WTC11 (cell line): ENCODE measurements at regions of chr7 and their contacts with region 1.

Region 1: GRCh38 chr7:41940760-41941343 is 238.0 kb upstream of the INHBA start:
- DNase-seq: peak; percentile 71
- ATAC-seq: peak; percentile 83
- H3K4me3 Mint-ChIP-seq: no peak overlapping the region
- H3K27ac Mint-ChIP-seq: no peak overlapping the region
- H3K4me1 Mint-ChIP-seq: peaks cover 18% of the 10 kb centered on the region
- H3K27me3 Mint-ChIP-seq: peaks cover 17% of the 10 kb centered on the region
- CTCF ChIP-seq: peak; percentile 84

Region 2: GRCh38 chr7:41834805-41835694 is 105.8 kb before region 1 on chr7:
- CTCF ChIA-PET with region 1: no interaction called
- POLR2A ChIA-PET with region 1: no interaction called
- DNase-seq: no peak
- ATAC-seq: 0 out of 2 replicates have a peak, but pooled peaks have one; percentile 26
- H3K4me3 Mint-ChIP-seq: no peak overlapping the region
- H3K27ac Mint-ChIP-seq: no peak overlapping the region
- H3K4me1 Mint-ChIP-seq: peaks cover 13% of the 10 kb centered on the region
- H3K27me3 Mint-ChIP-seq: peaks cover 15% of the 10 kb centered on the region
- CTCF ChIP-seq: no peak

Region 3: GRCh38 chr7:41892356-41893100 is 48.3 kb before region 1 on chr7:
- CTCF ChIA-PET with region 1: interaction called, 14 read pairs
- POLR2A ChIA-PET with region 1: no interaction called
- DNase-seq: peak; percentile 65
- ATAC-seq: peak; percentile 97
- H3K4me3 Mint-ChIP-seq: no peak overlapping the region
- H3K27ac Mint-ChIP-seq: no peak overlapping the region
- H3K4me1 Mint-ChIP-seq: peaks cover 1% of the 10 kb centered on the region; the same call in 1 of the 2 replicates
- H3K27me3 Mint-ChIP-seq: no peaks in the 10 kb centered on the region
- CTCF ChIP-seq: peak; percentile 28; the same call in 1 of the 2 replicates

Region 4: DNA sequence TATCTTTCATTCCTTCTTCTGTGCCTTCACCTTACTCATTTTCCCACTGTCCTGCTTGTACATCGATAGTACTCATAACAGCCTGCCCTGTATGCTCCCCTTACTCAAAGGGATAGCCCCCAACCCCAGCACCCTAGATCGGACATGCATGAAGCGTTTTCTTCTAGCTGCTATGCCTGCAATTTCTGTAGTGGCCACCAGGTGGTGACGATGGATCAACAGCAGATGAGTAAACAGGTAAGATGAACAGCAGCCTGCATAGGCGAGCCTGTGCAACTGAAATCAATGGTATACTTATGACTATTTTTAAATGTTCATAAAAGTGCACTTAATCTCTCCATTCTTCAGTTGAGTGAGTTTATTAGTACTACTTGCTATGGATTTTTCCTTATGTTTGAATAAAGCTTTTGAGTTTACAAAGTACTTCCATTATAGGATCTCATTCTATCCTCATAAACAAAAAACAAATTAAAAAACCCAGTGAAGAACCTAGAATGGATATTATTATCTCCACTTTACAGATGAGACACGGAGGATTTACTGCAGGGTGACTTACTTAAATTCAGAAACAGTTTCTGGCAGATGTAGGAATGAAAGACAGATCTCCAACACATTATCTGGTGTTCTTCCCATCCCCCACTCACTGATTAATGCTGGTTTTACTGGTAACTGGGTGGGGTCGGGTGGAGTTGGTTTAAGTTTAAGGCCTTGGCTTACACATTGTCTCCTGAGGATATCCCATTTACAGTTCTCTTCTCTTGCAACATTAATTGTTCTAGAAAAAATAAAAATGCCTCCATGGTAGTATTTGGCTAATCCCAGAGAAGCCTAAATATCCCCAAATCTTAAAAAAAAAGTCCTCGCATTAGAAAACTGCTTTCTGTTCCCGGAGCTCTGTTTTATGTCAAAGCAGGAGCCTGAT is 74.0 kb after region 1 on chr7:
- CTCF ChIA-PET with region 1: interaction called, 10 read pairs
- POLR2A ChIA-PET with region 1: no interaction called
- DNase-seq: peak; percentile 87
- ATAC-seq: peak; percentile 83
- H3K4me3 Mint-ChIP-seq: no peak overlapping the region
- H3K27ac Mint-ChIP-seq: no peak overlapping the region
- H3K4me1 Mint-ChIP-seq: peaks cover 30% of the 10 kb centered on the region
- H3K27me3 Mint-ChIP-seq: no peaks in the 10 kb centered on the region; the same call in 1 of the 2 replicates
- CTCF ChIP-seq: peak; percentile 92

Region 5: DNA sequence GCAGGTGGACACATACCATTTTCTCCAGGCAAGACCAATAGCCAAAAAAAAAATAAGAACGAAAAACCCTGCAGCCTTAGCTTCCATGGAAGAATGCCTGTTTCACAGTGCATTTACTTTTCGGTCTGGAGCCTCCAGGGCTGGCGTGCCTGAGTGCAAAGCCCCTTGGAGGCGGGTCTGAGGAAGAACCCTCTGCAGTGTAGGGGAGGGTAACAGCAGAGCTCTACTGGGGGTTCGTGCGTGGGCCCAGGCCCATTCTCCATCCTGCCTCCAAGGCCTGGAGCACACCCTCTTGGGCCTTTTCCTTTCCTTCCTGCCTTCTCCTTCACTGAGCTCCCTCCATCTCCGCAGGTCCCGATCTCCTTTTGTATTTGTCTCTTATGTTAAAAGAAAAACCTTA is 468.4 kb after region 1 on chr7:
- CTCF ChIA-PET with region 1: interaction called, 11 read pairs
- POLR2A ChIA-PET with region 1: no interaction called
- DNase-seq: no peak
- ATAC-seq: peak; percentile 67
- H3K4me3 Mint-ChIP-seq: no peak overlapping the region
- H3K27ac Mint-ChIP-seq: no peak overlapping the region
- H3K4me1 Mint-ChIP-seq: peaks cover 13% of the 10 kb centered on the region
- H3K27me3 Mint-ChIP-seq: no peaks in the 10 kb centered on the region
- CTCF ChIP-seq: no peak

Region 6: DNA sequence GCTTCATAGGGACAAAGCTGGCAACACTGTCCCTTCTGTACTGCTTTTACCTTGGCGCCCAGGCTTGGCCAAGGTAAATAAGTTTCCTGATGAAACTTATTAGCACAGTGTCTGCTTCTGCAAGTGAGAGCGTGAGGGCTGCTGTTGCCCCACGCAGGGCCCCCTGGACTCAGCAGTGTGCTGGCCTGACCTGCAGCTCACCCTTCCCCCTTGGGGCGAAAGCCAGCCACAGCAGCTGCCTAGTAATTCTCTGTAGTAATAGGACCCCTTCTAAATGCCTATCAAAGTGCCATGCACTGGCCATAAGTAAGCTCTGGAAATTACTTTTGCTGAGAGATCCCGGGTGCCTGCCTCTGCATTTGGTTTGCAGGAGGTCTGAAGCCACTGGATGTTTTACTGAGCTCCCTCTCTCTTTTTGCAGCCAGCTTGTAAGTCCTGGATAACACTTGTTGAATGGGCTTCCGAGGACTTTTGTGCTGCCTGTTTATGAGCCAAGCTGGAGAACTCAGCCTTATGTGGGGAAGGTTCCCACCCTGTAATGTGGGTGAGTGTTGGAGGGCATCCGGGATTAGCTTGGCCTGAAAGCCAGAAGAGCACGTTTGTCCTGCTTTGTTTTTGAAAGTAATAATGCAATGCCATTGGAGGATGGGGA is 677.1 kb after region 1 on chr7:
- CTCF ChIA-PET with region 1: interaction called, 15 read pairs
- POLR2A ChIA-PET with region 1: no interaction called
- DNase-seq: peak; percentile 54
- ATAC-seq: peak; percentile 93
- H3K4me3 Mint-ChIP-seq: no peak overlapping the region
- H3K27ac Mint-ChIP-seq: no peak overlapping the region
- H3K4me1 Mint-ChIP-seq: peaks cover 9% of the 10 kb centered on the region; the same call in 1 of the 2 replicates
- H3K27me3 Mint-ChIP-seq: no peaks in the 10 kb centered on the region
- CTCF ChIP-seq: 0 out of 2 replicates have a peak, but pooled peaks have one; percentile 15

Region 7: DNA sequence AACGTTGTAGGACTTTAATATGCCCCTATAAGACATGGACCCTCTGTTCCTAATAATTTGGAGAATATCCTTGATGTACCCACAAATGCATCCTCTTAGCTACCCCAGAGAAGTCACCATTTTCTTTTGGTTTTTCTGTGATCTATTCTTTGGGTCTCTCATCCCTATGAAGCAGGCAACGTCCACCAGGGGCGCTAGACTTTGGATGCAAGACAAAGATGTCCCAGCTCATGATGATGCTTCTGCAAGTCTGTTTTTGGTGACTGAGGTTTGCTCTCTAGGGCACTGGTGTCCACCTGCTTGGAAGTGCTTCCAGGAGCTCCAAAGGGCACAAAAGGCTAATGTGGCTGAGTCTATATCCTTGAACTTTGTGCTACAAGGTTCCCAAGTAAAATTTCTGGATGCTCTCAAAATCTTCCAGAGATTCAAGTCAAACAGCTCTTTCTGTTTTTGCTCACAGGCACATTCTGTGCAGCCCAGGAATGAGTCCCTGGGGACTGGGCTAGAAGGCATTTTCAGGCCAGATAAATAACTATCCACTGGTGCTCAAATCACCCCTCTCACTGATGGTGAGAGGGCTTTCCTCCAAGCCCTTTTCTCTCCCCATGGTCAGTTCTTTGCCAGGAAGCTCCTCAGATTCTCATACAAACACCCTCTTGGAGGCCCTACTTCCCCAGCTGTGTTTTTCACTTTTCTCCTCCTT is 804.7 kb after region 1 on chr7:
- CTCF ChIA-PET with region 1: interaction called, 11 read pairs
- POLR2A ChIA-PET with region 1: no interaction called
- DNase-seq: peak; percentile 82
- ATAC-seq: peak; percentile 43; the same call in 1 of the 2 replicates
- H3K4me3 Mint-ChIP-seq: no peak overlapping the region
- H3K27ac Mint-ChIP-seq: no peak overlapping the region
- H3K4me1 Mint-ChIP-seq: peaks cover 6% of the 10 kb centered on the region
- H3K27me3 Mint-ChIP-seq: no peaks in the 10 kb centered on the region
- CTCF ChIP-seq: peak; percentile 85

Region 8: DNA sequence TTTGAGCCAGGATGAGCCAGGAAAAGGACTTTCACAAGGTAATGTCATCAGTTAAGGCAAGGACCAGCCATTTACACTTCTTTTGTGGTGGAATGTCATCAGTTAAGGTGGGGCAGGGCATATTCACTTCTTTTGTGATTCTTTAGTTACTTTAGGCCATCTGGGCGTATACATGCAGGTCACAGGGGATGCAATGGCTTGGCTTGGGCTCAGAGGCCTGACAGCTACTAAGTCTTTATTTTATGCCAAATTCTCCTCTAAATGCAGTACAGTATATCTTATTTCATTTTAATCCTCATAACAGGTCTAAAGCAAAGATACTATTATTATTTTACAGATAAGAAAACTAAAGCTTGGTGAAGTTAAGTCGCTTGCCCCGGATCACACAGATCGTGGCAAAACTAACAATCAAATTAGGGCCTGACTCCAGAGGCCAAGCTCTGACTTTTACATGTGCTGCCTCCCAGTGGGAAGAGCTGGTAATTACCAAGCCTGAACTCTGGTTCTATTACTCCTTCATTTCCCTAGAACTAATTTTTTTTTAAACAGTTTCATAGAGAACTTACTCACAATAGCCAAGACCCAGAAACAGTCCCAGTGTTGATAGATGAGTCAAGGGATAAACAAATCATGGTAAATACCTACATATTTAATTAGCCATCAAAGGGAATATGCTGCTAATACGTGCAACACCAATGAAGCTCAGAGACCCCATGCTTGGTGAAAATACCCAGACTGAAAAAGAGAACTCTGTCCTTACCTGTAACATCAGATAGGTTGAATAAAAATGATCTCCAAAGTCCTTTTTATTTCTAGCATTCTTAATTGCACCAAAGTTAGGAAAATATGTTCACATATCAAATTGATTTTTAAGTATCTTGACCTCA is 935.6 kb after region 1 on chr7:
- CTCF ChIA-PET with region 1: interaction called, 22 read pairs
- POLR2A ChIA-PET with region 1: no interaction called
- DNase-seq: peak; percentile 74
- ATAC-seq: peak; percentile 97
- H3K4me3 Mint-ChIP-seq: no peak overlapping the region
- H3K27ac Mint-ChIP-seq: peak overlapping the region; percentile 84
- H3K4me1 Mint-ChIP-seq: peaks cover 54% of the 10 kb centered on the region
- H3K27me3 Mint-ChIP-seq: no peaks in the 10 kb centered on the region
- CTCF ChIP-seq: peak; percentile 78